Transverse colon (tissue), 4 donors: ENCODE measurements at regions of chr3 and their contacts with region 1.

Region 1: GRCh38 chr3:156535162-156535627 is 19.7 kb downstream of the SSR3 start:
- DNase-seq: peak; percentile 51
- H3K4me3 ChIP-seq: no peak overlapping the region
- H3K27ac ChIP-seq: peak overlapping the region; percentile 69 to 76 (median 74)
- H3K4me1 ChIP-seq: peaks cover 8 to 17% (median 15%) of the 10 kb centered on the region in 4 donors
- H3K27me3 ChIP-seq: no peaks in the 10 kb centered on the region
- CTCF ChIP-seq: peak in 1 of 5 experiments; percentile 28
- EP300 ChIP-seq: no peak
- POLR2A ChIP-seq: peak; percentile 10

Region 2: DNA sequence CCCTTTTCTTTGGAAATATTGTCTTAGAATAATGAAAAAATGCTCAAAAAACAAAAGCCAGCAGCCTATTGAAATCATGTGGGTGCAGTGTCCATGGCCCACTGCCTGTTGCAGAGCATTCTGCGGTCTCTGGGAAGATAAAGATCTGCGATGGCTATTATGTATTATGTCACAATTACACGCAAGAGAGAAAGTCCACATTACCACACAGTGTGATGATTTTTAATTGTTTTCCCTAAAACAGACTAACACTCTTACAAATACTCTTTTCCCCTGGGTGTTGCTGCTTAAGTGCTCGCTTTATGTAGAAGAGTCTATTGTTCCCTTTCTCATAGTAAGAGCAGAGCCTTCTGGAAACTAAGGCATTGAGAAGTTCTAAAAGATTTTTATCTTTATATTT is 12.5 kb before region 1 on chr3:
- in situ Hi-C with region 1: no loop called
- intact Hi-C with region 1: loop called (anchors 2 kb)
- DNase-seq: no peak
- H3K4me3 ChIP-seq: no peak overlapping the region
- H3K27ac ChIP-seq: no peak overlapping the region
- H3K4me1 ChIP-seq: peaks cover 0 to 3% (median 0%) of the 10 kb centered on the region in 4 donors
- H3K27me3 ChIP-seq: no peaks in the 10 kb centered on the region
- CTCF ChIP-seq: no peak
- EP300 ChIP-seq: no peak
- POLR2A ChIP-seq: no peak

Region 3: DNA sequence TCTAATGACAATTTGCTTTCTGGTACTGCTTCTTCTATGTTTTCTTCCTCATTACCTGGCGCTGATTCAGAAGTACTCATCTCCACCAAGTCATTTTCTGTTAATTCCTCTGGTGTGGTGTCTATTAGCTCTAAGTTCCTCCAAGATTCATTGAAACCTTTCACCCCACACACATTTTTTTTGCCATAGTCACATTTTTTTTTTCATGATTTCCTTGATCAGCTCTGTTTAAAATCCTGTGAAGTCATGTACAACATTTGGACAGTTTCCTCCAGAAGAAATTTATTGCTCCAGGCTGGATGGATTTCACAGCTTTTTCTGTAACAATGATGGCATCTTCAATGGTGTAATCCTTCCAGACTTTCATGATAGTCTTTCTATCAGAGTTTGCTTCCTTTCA is 1211.2 kb after region 1 on chr3:
- in situ Hi-C with region 1: no loop called
- intact Hi-C with region 1: no loop called
- DNase-seq: no peak
- H3K4me3 ChIP-seq: no peak overlapping the region
- H3K27ac ChIP-seq: no peak overlapping the region
- H3K4me1 ChIP-seq: no peaks in the 10 kb centered on the region
- H3K27me3 ChIP-seq: no peaks in the 10 kb centered on the region
- CTCF ChIP-seq: no peak
- EP300 ChIP-seq: no peak
- POLR2A ChIP-seq: no peak